Activated B cell treated with CpG ODN at 0.5 μM for 24 hours (primary cell): ENCODE measurements at regions of chr10 and their contacts with region 1.

Region 1: DNA sequence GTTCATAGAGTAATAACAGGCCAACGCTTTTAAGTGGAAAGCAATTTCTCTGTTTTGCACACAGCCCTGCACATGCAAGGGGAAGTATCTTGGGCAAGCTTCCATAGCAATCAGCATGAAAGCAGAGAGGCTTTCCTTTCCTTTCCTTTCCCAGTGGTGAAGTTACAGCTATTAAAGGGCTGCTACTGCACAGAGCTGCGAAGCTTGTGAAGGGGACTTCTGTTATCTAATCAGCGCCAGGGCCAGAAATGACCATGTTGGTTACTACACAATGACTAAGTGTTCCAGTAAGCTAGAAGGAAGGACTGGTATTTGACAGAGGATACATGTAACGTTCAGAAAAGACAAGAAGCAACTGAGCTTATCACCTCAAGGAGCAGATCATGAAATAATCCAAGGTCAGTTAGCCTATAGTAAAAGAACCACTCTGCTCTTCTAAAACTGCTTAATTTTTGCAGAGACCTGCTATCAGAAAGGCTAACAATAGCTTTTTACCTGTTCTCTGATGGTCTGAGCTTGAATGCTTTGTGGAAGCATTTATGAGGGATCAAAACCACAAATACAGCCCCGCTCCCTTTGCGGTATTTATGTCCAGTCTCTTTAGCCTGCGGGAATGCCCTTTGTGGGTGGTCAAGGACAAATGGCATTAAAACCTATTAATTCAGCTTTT is 45.9 kb downstream of the SGMS1 start:
- DNase-seq: no peak
- ATAC-seq: peak; percentile 21
- H3K4me3 Mint-ChIP-seq: no peak overlapping the region
- H3K27ac Mint-ChIP-seq: peak overlapping the region; percentile 24
- H3K4me1 Mint-ChIP-seq: peaks cover 74% of the 10 kb centered on the region
- H3K27me3 Mint-ChIP-seq: no peaks in the 10 kb centered on the region
- CTCF ChIP-seq: no peak

Region 2: DNA sequence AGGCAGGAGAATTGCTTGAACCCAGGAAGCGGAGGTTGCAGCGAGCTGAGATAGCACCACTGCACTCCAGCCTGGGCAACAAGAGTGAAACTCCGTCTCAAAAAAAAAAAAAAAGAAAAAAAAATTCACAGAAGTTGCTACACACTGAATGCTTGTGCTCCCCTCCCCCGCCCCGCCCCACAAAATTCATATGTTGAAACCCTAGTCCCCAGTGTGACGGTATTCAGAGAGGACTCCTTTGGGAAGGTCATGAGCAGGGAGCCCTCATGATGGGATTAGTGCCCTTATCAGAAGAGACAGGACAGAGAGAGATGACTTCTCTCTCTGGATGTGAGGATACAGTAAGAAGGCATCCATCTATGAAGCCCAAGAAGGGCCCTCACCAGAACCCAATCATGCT is 20.1 kb after region 1 on chr10:
- CTCF ChIA-PET with region 1: no interaction called
- POLR2A ChIA-PET with region 1: no interaction called
- intact Hi-C with region 1: loop called (anchors 2 kb)
- DNase-seq: no peak
- ATAC-seq: no peak
- H3K4me3 Mint-ChIP-seq: no peak overlapping the region
- H3K27ac Mint-ChIP-seq: no peak overlapping the region
- H3K4me1 Mint-ChIP-seq: peaks cover 25% of the 10 kb centered on the region
- H3K27me3 Mint-ChIP-seq: no peaks in the 10 kb centered on the region
- CTCF ChIP-seq: no peak